ENCODE measurements at regions of chr11 and their contacts with region 1.

Region 1: GRCh38 chr11:9748361-9748970 is 84.6 kb downstream of the SWAP70 start:
- DNase-seq: peak; percentile 80
- ATAC-seq: peak; percentile 94
- H3K4me3 ChIP-seq: no peak overlapping the region
- H3K27ac ChIP-seq: no peak overlapping the region
- H3K4me1 ChIP-seq: peaks cover 21% of the 10 kb centered on the region
- H3K27me3 ChIP-seq: no peaks in the 10 kb centered on the region
- CTCF ChIP-seq: peak; percentile 92

Region 2: GRCh38 chr11:9506489-9507276 is 241.8 kb before region 1 on chr11:
- CTCF ChIA-PET with region 1: interaction called, 4 read pairs
- POLR2A ChIA-PET with region 1: no interaction called
- intact Hi-C with region 1: loop called (anchors 2 kb)
- DNase-seq: peak; percentile 90
- ATAC-seq: peak; percentile 88
- H3K4me3 ChIP-seq: no peak overlapping the region
- H3K27ac ChIP-seq: no peak overlapping the region
- H3K4me1 ChIP-seq: no peaks in the 10 kb centered on the region
- H3K27me3 ChIP-seq: no peaks in the 10 kb centered on the region
- CTCF ChIP-seq: peak; percentile 91

Region 3: GRCh38 chr11:9663699-9664275 is 84.7 kb before region 1 on chr11 and contains the start of gene SWAP70:
- CTCF ChIA-PET with region 1: interaction called, 3 read pairs
- POLR2A ChIA-PET with region 1: no interaction called
- intact Hi-C with region 1: loop called (anchors 5 kb)
- DNase-seq: peak; percentile 84
- ATAC-seq: peak; percentile 93
- H3K4me3 ChIP-seq: peak within 1 kb of the TSS; percentile 96
- H3K27ac ChIP-seq: peak within 1 kb of the TSS; percentile 51
- H3K4me1 ChIP-seq: peaks cover 15% of the 10 kb centered on the region
- H3K27me3 ChIP-seq: no peaks in the 10 kb centered on the region
- CTCF ChIP-seq: 0 out of 2 replicates have a peak, but pooled peaks have one; percentile 16
- total RNA-seq, gene SWAP70: 8.6 and 8.8 TPM in 2 replicates

Region 4: DNA sequence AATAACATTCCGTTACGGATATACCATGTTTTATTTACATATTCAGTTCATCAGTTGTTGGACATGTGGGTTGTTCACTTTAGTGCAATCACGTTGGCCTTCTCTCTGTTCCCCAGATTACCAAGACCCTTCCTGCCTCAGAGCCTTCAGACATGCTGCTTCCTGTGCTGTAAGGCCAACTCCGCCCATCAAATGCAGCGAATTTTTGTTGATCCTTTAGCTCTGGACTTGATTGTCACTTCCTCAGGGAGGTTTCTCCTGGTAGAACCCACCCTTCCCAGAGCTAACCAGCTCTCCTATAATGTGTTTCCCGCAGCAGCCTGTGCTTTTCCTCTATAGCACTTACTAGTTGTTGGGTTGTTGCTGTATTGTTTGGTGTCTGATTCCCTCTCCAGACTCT is 45.2 kb before region 1 on chr11:
- CTCF ChIA-PET with region 1: interaction called, 4 read pairs
- POLR2A ChIA-PET with region 1: no interaction called
- intact Hi-C with region 1: loop called (anchors 1 kb)
- DNase-seq: no peak
- ATAC-seq: no peak
- H3K4me3 ChIP-seq: no peak overlapping the region
- H3K27ac ChIP-seq: 0 out of 2 replicates have a peak overlapping the region, but pooled peaks have one; percentile 27
- H3K4me1 ChIP-seq: peaks cover 23% of the 10 kb centered on the region
- H3K27me3 ChIP-seq: no peaks in the 10 kb centered on the region
- CTCF ChIP-seq: no peak

Region 5: DNA sequence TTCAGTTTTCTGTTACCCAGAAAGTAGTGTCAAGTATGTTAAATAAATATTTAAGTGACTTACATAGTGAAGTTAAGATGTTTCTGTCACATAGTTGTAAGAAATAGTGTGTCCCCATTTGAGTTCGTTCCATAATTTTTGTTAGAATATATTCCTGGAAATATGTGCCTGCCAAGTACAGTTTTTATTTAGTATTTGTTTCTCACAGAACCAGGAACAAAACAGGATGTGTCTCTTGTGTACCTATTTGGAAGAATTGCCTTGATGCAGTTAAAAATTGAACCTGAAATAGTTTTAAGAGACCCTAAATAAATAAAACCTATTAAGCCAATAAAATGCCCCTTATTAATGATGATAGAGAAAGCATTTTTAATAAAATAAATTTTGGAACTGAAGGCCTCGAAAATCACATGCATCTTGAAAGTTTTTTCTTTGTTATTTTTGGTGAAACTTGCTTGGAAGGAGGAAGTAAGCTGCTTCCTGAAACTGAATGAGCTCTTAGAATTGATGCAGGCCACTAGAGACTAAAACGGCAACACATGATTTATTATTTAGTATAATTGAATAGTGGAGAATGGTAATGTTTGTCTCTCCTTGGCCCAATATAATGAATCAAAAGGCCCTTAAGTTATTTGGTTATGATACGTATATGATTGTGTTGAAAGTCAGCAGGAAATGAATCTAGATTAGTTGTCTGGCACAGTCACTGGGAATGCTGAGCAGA is 28.7 kb before region 1 on chr11:
- CTCF ChIA-PET with region 1: interaction called, 10 read pairs
- POLR2A ChIA-PET with region 1: no interaction called
- intact Hi-C with region 1: no loop called
- DNase-seq: peak; percentile 40
- ATAC-seq: peak; percentile 39
- H3K4me3 ChIP-seq: no peak overlapping the region
- H3K27ac ChIP-seq: peak overlapping the region; percentile 31
- H3K4me1 ChIP-seq: peaks cover 31% of the 10 kb centered on the region
- H3K27me3 ChIP-seq: no peaks in the 10 kb centered on the region
- CTCF ChIP-seq: no peak

Region 6: GRCh38 chr11:9838961-9839360 is 90.5 kb after region 1 on chr11:
- CTCF ChIA-PET with region 1: no interaction called
- POLR2A ChIA-PET with region 1: no interaction called
- intact Hi-C with region 1: no loop called
- DNase-seq: peak; percentile 94
- ATAC-seq: peak; percentile 98
- H3K4me3 ChIP-seq: peak overlapping the region; percentile 19; the same call in 1 of the 2 replicates
- H3K27ac ChIP-seq: peak overlapping the region; percentile 75
- H3K4me1 ChIP-seq: peaks cover 34% of the 10 kb centered on the region
- H3K27me3 ChIP-seq: no peaks in the 10 kb centered on the region
- CTCF ChIP-seq: no peak

Measured in PC-3 (cell line).